ENCODE measurements at regions of chr1 and their contacts with region 1.

Region 1: GRCh38 chr1:38891753-38892152 is 10.4 kb upstream of the GJA9 start:
- DNase-seq: peak; percentile 4
- ATAC-seq: no peak; the same call in 1 of the 2 replicates
- H3K4me3 ChIP-seq: no peak overlapping the region
- H3K27ac ChIP-seq: no peak overlapping the region
- H3K4me1 ChIP-seq: no peaks in the 10 kb centered on the region
- H3K27me3 ChIP-seq: no peaks in the 10 kb centered on the region
- CTCF ChIP-seq: no peak
- POLR2A ChIP-seq: no peak
- RAD21 ChIP-seq: no peak

Region 2: DNA sequence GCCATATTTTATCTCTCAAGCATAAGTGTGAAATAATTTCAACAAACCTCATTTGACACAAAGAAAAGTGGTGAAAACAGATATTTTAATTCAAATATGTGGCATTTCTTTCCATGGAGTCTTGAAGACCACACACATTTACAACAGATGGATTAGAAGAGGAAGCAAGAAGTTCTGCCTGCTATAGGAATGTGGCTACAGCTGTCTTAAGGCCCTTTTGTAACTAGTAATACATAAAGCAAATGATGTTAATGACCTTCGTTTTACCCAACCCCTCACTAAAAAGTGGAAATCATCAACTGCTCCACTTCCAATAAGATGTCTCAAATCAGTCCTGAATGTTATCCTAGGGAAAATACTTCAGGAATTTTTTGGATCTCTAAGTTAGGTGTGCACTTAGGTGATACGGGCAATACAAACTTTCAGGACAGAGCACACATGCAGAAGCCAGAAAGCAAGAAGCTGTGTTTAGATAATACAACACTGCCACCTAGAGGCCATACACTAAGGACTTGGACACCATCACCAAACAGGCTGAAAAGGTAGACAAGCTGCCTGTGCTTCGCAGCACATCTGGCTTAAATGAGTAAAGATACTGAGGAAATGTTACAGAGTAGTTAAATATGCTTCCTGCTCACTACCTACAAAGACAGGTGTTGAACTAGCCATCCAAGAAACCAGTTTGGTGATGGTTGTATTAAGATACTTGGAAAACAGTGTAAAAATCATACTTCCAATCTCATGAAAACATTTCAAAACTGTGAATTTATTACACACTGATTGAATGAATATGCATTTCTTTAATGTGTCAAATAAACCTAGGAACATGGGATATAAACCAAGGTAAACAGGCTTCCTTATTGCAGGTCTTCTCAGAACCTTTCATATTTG is 56.6 kb before region 1 on chr1:
- CTCF ChIA-PET with region 1: no interaction called
- POLR2A ChIA-PET with region 1: no interaction called
- dilution Hi-C with region 1: no loop called
- in situ Hi-C with region 1: no loop called
- intact Hi-C with region 1: no loop called
- DNase-seq: peak; percentile 87
- ATAC-seq: peak; percentile 91
- H3K4me3 ChIP-seq: no peak overlapping the region
- H3K27ac ChIP-seq: no peak overlapping the region
- H3K4me1 ChIP-seq: no peaks in the 10 kb centered on the region
- H3K27me3 ChIP-seq: peaks cover 17% of the 10 kb centered on the region
- CTCF ChIP-seq: peak; percentile 81
- POLR2A ChIP-seq: no peak
- RAD21 ChIP-seq: peak; percentile 85

Region 3: GRCh38 chr1:38964140-38964548 is 72.4 kb after region 1 on chr1:
- CTCF ChIA-PET with region 1: no interaction called
- POLR2A ChIA-PET with region 1: no interaction called
- dilution Hi-C with region 1: no loop called
- in situ Hi-C with region 1: no loop called
- intact Hi-C with region 1: loop called (anchors 2 kb)
- DNase-seq: no peak
- ATAC-seq: no peak
- H3K4me3 ChIP-seq: no peak overlapping the region
- H3K27ac ChIP-seq: no peak overlapping the region
- H3K4me1 ChIP-seq: peaks cover 5% of the 10 kb centered on the region
- H3K27me3 ChIP-seq: no peaks in the 10 kb centered on the region
- CTCF ChIP-seq: no peak
- POLR2A ChIP-seq: no peak
- RAD21 ChIP-seq: no peak

Region 4: DNA sequence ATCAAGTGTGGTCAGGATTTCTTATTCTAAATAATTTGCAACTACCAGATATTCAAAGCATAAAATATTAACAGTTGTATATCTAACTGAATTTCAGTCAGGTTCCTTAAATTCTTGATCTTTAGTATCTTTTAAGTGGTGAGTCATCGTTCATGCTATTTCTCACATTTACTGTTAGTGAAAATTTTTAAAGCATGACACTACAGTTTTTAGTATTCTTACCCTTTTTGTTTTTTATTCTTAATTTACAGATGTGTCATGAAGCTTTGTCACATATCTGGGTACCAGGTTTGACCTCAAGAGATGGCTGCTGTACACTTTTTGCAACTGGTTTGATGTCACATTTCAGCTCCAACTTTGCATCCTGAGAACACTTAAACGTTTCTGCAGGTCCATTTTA is 112.0 kb after region 1 on chr1:
- CTCF ChIA-PET with region 1: no interaction called
- POLR2A ChIA-PET with region 1: no interaction called
- dilution Hi-C with region 1: no loop called
- in situ Hi-C with region 1: no loop called
- intact Hi-C with region 1: no loop called
- DNase-seq: peak; percentile 33
- ATAC-seq: peak; percentile 41
- H3K4me3 ChIP-seq: no peak overlapping the region
- H3K27ac ChIP-seq: no peak overlapping the region
- H3K4me1 ChIP-seq: peaks cover 3% of the 10 kb centered on the region; the same call in 1 of the 2 replicates
- H3K27me3 ChIP-seq: no peaks in the 10 kb centered on the region
- CTCF ChIP-seq: no peak
- POLR2A ChIP-seq: no peak
- RAD21 ChIP-seq: no peak